Left cardiac atrium (tissue), 4 donors: ENCODE measurements at regions of chr9 and their contacts with region 1.

Region 1: GRCh38 chr9:27194401-27195091 is 85.5 kb downstream of the TEK start:
- DNase-seq: no peak
- ATAC-seq: peak in 1 of 2 donors; percentile 27

Region 2: GRCh38 chr9:27110181-27110580 is 84.4 kb before region 1 on chr9:
- intact Hi-C with region 1: loop called in 1 of 2 experiments (anchors 5 kb)
- DNase-seq: no peak
- ATAC-seq: no peak